Esophagus muscularis mucosa (tissue), 4 donors: ENCODE measurements at regions of chr21 and their contacts with region 1.

Region 1: GRCh38 chr21:36927719-36928117 is 38.8 kb downstream of the HLCS start:
- DNase-seq: no peak
- H3K4me3 ChIP-seq: no peak overlapping the region
- H3K27ac ChIP-seq: no peak overlapping the region
- H3K4me1 ChIP-seq: peaks cover 0 to 10% (median 6%) of the 10 kb centered on the region in 4 donors
- H3K27me3 ChIP-seq: no peaks in the 10 kb centered on the region
- CTCF ChIP-seq: peak; percentile 78 to 86 (median 86)
- EP300 ChIP-seq: no peak
- POLR2A ChIP-seq: no peak

Region 2: GRCh38 chr21:36504067-36505058 is 423.4 kb before region 1 on chr21:
- intact Hi-C with region 1: loop called (anchors 2 kb)
- DNase-seq: no peak
- H3K4me3 ChIP-seq: no peak overlapping the region
- H3K27ac ChIP-seq: no peak overlapping the region
- H3K4me1 ChIP-seq: no peaks in the 10 kb centered on the region
- H3K27me3 ChIP-seq: no peaks in the 10 kb centered on the region
- CTCF ChIP-seq: peak; percentile 80 to 97 (median 89)
- EP300 ChIP-seq: no peak
- POLR2A ChIP-seq: no peak

Region 3: GRCh38 chr21:36630485-36631206 is 297.1 kb before region 1 on chr21:
- intact Hi-C with region 1: loop called (anchors 5 kb)
- DNase-seq: no peak
- H3K4me3 ChIP-seq: no peak overlapping the region
- H3K27ac ChIP-seq: no peak overlapping the region
- H3K4me1 ChIP-seq: no peaks in the 10 kb centered on the region
- H3K27me3 ChIP-seq: peaks cover 0 to 55% (median 0%) of the 10 kb centered on the region in 4 donors
- CTCF ChIP-seq: peak; percentile 25 to 57 (median 48)
- EP300 ChIP-seq: no peak
- POLR2A ChIP-seq: no peak

Region 4: GRCh38 chr21:36661511-36662309 is 266.0 kb before region 1 on chr21:
- intact Hi-C with region 1: loop called (anchors 5 kb)
- DNase-seq: no peak
- H3K4me3 ChIP-seq: no peak overlapping the region
- H3K27ac ChIP-seq: no peak overlapping the region
- H3K4me1 ChIP-seq: no peaks in the 10 kb centered on the region
- H3K27me3 ChIP-seq: peaks cover 0 to 86% (median 3%) of the 10 kb centered on the region in 4 donors
- CTCF ChIP-seq: peak; percentile 28 to 44 (median 36)
- EP300 ChIP-seq: no peak
- POLR2A ChIP-seq: no peak

Region 5: DNA sequence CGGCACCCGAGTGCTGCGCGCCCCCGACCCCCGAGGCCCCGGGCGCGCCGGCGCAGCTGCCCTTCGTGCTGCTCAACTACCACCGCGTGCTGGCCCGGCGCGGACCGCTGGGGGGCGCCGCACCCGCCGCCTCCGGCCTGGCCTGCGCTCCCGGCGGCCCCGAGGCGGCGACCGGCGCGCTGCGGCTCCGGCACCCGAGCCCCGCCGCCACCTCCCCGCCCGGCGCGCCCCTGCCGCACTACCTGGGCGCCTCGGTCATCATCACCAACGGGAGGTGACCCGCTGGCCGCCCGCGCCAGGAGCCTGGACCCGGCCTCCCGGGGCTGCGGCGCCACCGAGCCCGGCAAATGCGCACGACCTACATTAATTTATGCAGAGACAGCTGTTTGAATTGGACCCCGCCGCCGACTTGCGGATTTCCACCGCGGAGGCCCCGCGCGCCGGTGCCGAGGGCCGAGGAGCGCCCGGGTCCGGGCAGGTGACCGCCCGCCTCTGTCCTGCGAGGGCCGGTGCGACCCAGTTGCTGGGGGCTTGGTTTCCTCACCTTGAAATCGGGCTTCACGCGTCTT is 179.8 kb before region 1 on chr21:
- intact Hi-C with region 1: loop called (anchors 5 kb)
- DNase-seq: no peak
- H3K4me3 ChIP-seq: peak overlapping the region; percentile 50 to 63 (median 54)
- H3K27ac ChIP-seq: no peak overlapping the region
- H3K4me1 ChIP-seq: peaks cover 9 to 39% (median 27%) of the 10 kb centered on the region in 4 donors
- H3K27me3 ChIP-seq: peaks cover 0 to 47% (median 4%) of the 10 kb centered on the region in 4 donors
- CTCF ChIP-seq: peak in 2 of 3 experiments; percentile 23 to 26
- EP300 ChIP-seq: no peak
- POLR2A ChIP-seq: no peak

Region 6: GRCh38 chr21:37017951-37018679 is 90.4 kb after region 1 on chr21:
- intact Hi-C with region 1: no loop called
- DNase-seq: no peak
- H3K4me3 ChIP-seq: no peak overlapping the region
- H3K27ac ChIP-seq: no peak overlapping the region
- H3K4me1 ChIP-seq: no peaks in the 10 kb centered on the region
- H3K27me3 ChIP-seq: peaks cover 0 to 29% (median 0%) of the 10 kb centered on the region in 4 donors
- CTCF ChIP-seq: no peak
- EP300 ChIP-seq: no peak
- POLR2A ChIP-seq: no peak

Region 7: DNA sequence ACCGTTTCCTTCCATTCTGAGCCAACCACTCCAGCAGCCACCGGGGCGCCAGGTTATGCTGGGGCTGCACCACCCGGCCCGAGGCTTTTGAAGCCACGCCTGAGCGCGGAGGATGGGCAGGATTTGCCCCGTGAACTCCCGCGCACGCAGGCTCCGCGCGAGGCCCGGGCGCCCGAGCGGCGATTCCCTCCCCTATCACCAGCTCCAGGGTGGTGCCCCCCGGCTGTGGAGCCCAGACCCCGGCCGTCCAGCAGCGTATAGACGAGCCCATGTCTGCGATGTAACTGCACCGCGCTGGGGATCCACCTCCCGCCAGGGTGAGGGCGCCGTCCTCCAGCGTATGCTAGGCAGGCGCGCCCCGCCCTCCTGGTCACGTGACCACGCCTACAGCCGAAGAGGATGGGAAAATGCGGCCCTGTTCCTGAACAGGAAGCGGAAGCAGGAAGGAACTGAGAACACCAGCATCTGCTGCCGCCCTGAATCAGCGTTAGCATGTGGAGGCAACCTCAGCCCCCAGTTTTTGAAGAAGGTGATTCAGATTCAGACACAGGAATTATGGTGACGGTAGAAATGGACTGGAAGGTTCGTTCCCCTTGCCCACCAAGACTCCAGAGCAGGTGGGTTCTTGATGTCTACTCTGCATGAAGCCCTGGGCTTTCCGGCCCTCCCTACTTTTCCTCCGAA is 293.4 kb after region 1 on chr21:
- intact Hi-C with region 1: no loop called
- DNase-seq: peak; percentile 99
- H3K4me3 ChIP-seq: peak overlapping the region; percentile 67 to 79 (median 72)
- H3K27ac ChIP-seq: peak overlapping the region; percentile 78 to 89 (median 80)
- H3K4me1 ChIP-seq: peaks cover 7 to 14% (median 12%) of the 10 kb centered on the region in 4 donors
- H3K27me3 ChIP-seq: no peaks in the 10 kb centered on the region
- CTCF ChIP-seq: peak; percentile 16 to 62 (median 56)
- EP300 ChIP-seq: no peak
- POLR2A ChIP-seq: peak; percentile 1

Region 8: GRCh38 chr21:38258521-38259485 is 1331.1 kb after region 1 on chr21:
- intact Hi-C with region 1: no loop called
- DNase-seq: no peak
- H3K4me3 ChIP-seq: no peak overlapping the region
- H3K27ac ChIP-seq: no peak overlapping the region
- H3K4me1 ChIP-seq: no peaks in the 10 kb centered on the region
- H3K27me3 ChIP-seq: peaks cover 0 to 26% (median 0%) of the 10 kb centered on the region in 4 donors
- CTCF ChIP-seq: no peak
- EP300 ChIP-seq: no peak
- POLR2A ChIP-seq: no peak